T-cell (primary cell): ENCODE measurements at regions of chr4 and their contacts with region 1.

Region 1: DNA sequence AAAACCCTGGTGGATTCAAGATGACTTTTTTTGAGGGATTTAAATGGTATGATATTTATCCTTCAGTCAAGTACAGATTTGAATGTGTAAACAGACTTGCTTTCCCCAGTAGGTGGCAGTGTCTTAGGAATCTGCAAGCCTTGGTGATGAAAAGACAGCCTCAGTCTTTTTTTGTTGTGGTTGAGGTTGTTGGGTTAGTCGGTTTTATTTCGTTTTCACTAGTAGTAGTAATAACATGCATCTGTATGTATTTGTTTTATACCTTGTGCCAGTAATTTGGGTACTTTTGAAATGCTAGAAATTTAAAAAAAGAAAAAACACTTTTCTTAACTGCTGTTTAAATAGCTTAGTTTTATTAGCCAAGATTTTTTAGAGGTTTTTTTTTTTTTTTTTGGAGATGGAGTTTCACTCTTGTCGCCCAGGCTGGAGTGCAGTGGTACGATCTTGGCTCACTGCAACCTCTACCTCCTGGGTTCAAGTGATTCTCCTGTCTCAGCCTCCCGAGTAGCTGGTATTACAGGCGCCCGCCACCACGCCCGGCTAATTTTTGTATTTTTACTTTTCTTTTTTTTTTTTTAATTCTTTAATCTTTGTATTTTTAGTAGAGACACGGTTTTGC is 39.2 kb downstream of the COPS4 start:
- DNase-seq: peak in 30 of 35 experiments; percentile 14 to 92 (median 54)
- ATAC-seq: peak; percentile 89 to 97 (median 92)
- H3K4me3 ChIP-seq: no peak overlapping the region
- H3K4me3 Mint-ChIP-seq: peak overlapping the region; percentile 47 to 67 (median 55)
- H3K27ac ChIP-seq: no peak overlapping the region
- H3K27ac Mint-ChIP-seq: peak overlapping the region; percentile 49 to 81
- H3K4me1 ChIP-seq: peaks cover 0 to 7% of the 10 kb centered on the region in 2 experiments
- H3K4me1 Mint-ChIP-seq: peaks cover 5 to 28% (median 18%) of the 10 kb centered on the region in 3 donors
- H3K27me3 ChIP-seq: no peaks in the 10 kb centered on the region
- H3K27me3 Mint-ChIP-seq: no peaks in the 10 kb centered on the region

Region 2: GRCh38 chr4:83019794-83020494 is 54.3 kb before region 1 on chr4:
- CTCF ChIA-PET with region 1: no interaction called
- POLR2A ChIA-PET with region 1: no interaction called
- DNase-seq: no peak
- ATAC-seq: no peak
- H3K4me3 ChIP-seq: no peak overlapping the region
- H3K4me3 Mint-ChIP-seq: no peak overlapping the region
- H3K27ac ChIP-seq: no peak overlapping the region
- H3K27ac Mint-ChIP-seq: no peak overlapping the region
- H3K4me1 ChIP-seq: no peaks in the 10 kb centered on the region
- H3K4me1 Mint-ChIP-seq: no peaks in the 10 kb centered on the region
- H3K27me3 ChIP-seq: no peaks in the 10 kb centered on the region
- H3K27me3 Mint-ChIP-seq: no peaks in the 10 kb centered on the region

Region 3: DNA sequence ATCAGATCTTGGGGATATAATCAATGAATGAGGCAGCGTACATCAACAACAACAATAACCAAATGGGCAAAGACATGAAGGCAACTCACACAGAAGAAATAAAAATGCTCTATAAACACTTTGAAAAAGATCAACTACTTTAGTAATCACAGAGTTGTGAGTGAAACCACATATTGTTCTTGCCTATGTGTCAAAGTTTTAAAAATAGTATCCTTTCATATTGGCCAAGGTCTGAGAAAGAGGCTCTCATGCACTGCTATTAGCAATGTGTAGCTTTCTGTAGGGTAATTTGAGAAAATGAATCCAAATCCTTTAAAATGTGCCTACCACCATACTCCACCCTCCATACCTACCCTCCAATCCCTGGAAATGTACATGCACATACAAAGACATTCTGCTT is 185.4 kb after region 1 on chr4:
- CTCF ChIA-PET with region 1: interaction called, 7 to 28 read pairs
- POLR2A ChIA-PET with region 1: interaction called, 3 to 4 read pairs
- DNase-seq: no peak
- ATAC-seq: no peak
- H3K4me3 ChIP-seq: no peak overlapping the region
- H3K4me3 Mint-ChIP-seq: no peak overlapping the region
- H3K27ac ChIP-seq: no peak overlapping the region
- H3K27ac Mint-ChIP-seq: no peak overlapping the region
- H3K4me1 ChIP-seq: peaks cover 0 to 4% of the 10 kb centered on the region in 2 experiments
- H3K4me1 Mint-ChIP-seq: peaks cover 8 to 18% (median 9%) of the 10 kb centered on the region in 3 donors
- H3K27me3 ChIP-seq: no peaks in the 10 kb centered on the region
- H3K27me3 Mint-ChIP-seq: no peaks in the 10 kb centered on the region

Region 4: GRCh38 chr4:83267121-83267829 is 193.1 kb after region 1 on chr4:
- CTCF ChIA-PET with region 1: interaction called, 4 to 17 read pairs
- POLR2A ChIA-PET with region 1: interaction called in 1 of 2 experiments, 3 read pairs
- DNase-seq: no peak
- ATAC-seq: no peak
- H3K4me3 ChIP-seq: no peak overlapping the region
- H3K4me3 Mint-ChIP-seq: no peak overlapping the region
- H3K27ac ChIP-seq: no peak overlapping the region
- H3K27ac Mint-ChIP-seq: no peak overlapping the region
- H3K4me1 ChIP-seq: peaks cover 0 to 8% of the 10 kb centered on the region in 2 experiments
- H3K4me1 Mint-ChIP-seq: peaks cover 0 to 8% (median 7%) of the 10 kb centered on the region in 3 donors
- H3K27me3 ChIP-seq: no peaks in the 10 kb centered on the region
- H3K27me3 Mint-ChIP-seq: no peaks in the 10 kb centered on the region